ENCODE measurements at regions of chr15 and their contacts with region 1.

Region 1: DNA sequence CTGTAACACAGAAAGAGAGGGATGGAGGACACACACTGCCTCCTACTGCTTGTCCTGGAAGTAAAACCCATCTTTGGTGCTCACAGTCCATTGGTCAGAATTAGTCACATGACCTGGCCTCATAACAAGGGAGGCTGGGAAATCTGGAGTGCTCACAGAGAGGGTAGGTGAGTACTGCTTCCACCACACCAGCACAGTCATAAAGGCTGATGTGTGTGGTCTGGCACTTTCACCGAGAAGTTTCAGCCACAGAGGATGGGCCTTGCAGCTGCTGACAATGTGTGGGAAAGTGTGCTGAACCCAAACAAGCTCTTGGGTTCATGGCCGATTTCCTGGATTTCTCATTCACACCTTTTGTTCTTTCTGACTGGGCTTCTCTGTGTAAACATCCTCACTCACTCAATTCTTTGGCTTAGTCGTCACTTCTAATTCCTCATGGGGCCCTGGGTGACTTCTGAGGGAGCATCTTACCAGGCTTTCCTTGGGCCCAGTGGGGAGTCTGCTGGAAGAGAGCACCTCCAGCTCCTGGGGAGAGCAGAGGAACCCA is 100.7 kb downstream of the ASB7 start:
- DNase-seq: no peak

Region 2: GRCh38 chr15:99613887-99614647 is 1089.0 kb before region 1 on chr15:
- intact Hi-C with region 1: no loop called
- DNase-seq: peak; percentile 81

Region 3: GRCh38 chr15:100757661-100758060 is 54.6 kb after region 1 on chr15:
- intact Hi-C with region 1: loop called in 1 of 2 experiments (anchors 1 kb)
- DNase-seq: no peak

Measured in posterior vena cava (tissue), 2 donors.